Caco-2 (cell line): ENCODE measurements at regions of chr20 and their contacts with region 1.

Region 1: DNA sequence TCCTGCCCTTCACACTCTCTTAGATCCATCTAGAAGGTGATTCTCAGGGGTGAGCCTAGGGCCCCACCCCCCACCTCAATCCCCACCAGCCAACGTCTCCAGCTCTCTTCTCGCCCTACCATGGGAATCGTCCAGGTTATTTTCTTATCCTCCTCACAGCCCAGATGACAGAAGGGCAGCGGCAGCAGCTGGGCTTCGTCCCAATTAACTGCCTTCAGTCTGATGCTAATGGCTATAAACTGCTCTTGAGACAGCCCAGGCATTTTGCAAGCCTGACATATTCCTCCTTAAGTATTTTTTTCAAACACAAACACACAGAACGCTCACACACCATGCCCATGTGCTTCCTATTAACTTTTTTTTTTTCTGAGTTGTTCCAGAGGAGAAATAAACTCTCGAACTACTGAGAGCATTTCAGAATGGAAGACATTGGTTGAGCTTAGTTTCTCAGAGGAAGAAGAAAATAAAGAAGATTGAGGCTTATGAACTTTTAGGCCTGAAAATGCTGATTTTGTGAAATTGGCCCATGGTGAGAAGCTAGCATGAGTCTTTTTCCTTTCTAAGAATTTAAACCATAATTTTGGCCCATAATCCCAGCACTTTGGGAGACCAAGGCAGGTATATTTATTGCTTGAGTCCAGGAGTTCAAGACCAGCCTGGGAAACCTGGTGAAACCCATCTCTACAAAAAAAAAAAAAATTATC is 124.6 kb downstream of the EYA2 start:
- DNase-seq: no peak
- H3K4me3 ChIP-seq: no peak overlapping the region
- H3K4me3 Mint-ChIP-seq: no peak overlapping the region
- H3K27ac Mint-ChIP-seq: no peak overlapping the region
- H3K4me1 ChIP-seq: no peaks in the 10 kb centered on the region
- H3K4me1 Mint-ChIP-seq: no peaks in the 10 kb centered on the region
- H3K27me3 ChIP-seq: no peaks in the 10 kb centered on the region; the same call in 1 of the 2 replicates
- H3K27me3 Mint-ChIP-seq: peaks cover 30% of the 10 kb centered on the region
- CTCF ChIP-seq: no peak

Region 2: GRCh38 chr20:47055699-47056369 is 36.6 kb after region 1 on chr20:
- CTCF ChIA-PET with region 1: no interaction called
- POLR2A ChIA-PET with region 1: no interaction called
- intact Hi-C with region 1: no loop called
- DNase-seq: peak in 1 of 2 experiments; percentile 26
- H3K4me3 ChIP-seq: no peak overlapping the region
- H3K4me3 Mint-ChIP-seq: no peak overlapping the region
- H3K27ac Mint-ChIP-seq: no peak overlapping the region
- H3K4me1 ChIP-seq: no peaks in the 10 kb centered on the region
- H3K4me1 Mint-ChIP-seq: no peaks in the 10 kb centered on the region
- H3K27me3 ChIP-seq: no peaks in the 10 kb centered on the region; the same call in 1 of the 2 replicates
- H3K27me3 Mint-ChIP-seq: peaks cover 10% of the 10 kb centered on the region
- CTCF ChIP-seq: no peak

Region 3: GRCh38 chr20:47127999-47128398 is 108.7 kb after region 1 on chr20:
- CTCF ChIA-PET with region 1: interaction called, 11 read pairs
- POLR2A ChIA-PET with region 1: no interaction called
- intact Hi-C with region 1: no loop called
- DNase-seq: no peak
- H3K4me3 ChIP-seq: no peak overlapping the region
- H3K4me3 Mint-ChIP-seq: no peak overlapping the region
- H3K27ac Mint-ChIP-seq: no peak overlapping the region
- H3K4me1 ChIP-seq: 0 out of 2 replicates have a peak, but pooled peaks cover 5% of the 10 kb centered on the region
- H3K4me1 Mint-ChIP-seq: peaks cover 17% of the 10 kb centered on the region
- H3K27me3 ChIP-seq: no peaks in the 10 kb centered on the region
- H3K27me3 Mint-ChIP-seq: no peaks in the 10 kb centered on the region
- CTCF ChIP-seq: no peak